ENCODE measurements at regions of chr2 and their contacts with region 1.

Region 1: DNA sequence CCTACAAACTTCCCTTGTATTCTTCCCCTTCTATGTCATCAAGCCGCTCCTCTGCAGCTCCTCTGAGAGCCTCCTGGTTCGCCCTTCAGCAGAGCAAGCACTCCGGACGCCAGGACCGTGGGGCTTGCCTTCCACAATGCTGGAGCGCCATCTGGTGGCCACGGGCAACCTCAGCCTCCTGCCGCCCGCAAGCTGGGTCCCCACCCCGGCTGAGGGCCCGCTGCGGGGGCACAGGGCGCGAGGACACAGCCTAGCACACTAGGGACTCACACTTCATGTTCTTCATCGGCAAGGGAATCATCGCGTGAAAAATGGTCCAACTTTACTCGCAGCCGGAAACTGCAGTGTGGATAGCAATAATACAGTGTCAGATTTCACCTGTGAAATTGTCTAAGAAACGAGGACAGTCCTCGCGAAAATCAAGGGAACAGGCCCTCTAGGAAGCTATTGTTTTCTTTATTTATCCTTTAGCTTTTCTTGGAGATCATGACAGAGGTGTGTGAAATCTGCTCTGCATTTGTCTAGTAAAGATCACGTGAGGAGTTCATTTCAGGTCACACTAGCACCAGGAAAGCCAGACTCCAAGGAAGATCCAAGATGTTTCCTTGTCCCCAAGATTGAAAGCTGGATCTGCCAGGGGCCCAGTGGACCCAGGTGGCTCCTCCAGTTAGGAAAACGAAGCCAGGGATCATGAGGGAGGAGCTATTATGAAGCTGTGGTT is 5.8 kb downstream of the PRLH start:
- DNase-seq: peak; percentile 92
- H3K4me3 ChIP-seq: no peak overlapping the region
- H3K27ac ChIP-seq: peak overlapping the region; percentile 6 to 28
- H3K4me1 ChIP-seq: peaks cover 0 to 8% of the 10 kb centered on the region in 2 donors
- H3K27me3 ChIP-seq: no peaks in the 10 kb centered on the region
- CTCF ChIP-seq: peak; percentile 97 to 100 (median 99)
- POLR2A ChIP-seq: peak in 1 of 2 donors; percentile 20

Region 2: DNA sequence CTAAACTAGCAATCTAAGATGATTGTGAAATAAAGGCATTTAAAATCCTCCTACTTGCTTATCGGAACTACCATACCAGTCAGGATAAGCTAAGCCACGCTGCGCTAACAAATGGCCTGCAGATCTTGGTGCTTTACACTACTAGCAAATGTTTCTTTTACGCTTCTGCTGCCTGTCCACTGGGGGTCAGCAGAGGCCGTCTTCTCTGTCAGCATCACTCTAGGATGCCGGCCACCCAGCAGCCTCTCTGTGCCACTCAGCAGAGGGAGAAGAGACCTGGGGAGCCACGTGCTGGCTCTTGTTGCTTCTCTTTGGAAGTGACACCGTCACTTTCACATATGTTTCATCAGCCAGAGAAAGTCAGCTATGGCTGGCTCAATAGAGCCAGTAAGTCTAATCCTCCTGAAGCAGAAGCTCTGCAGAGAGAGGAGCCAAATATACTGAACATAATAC is 449.9 kb before region 1 on chr2:
- intact Hi-C with region 1: loop called (anchors 10 kb)
- DNase-seq: peak; percentile 65 to 72
- H3K4me3 ChIP-seq: no peak overlapping the region
- H3K27ac ChIP-seq: peak overlapping the region in 1 of 2 donors; percentile 55
- H3K4me1 ChIP-seq: peaks cover 0 to 7% of the 10 kb centered on the region in 2 donors
- H3K27me3 ChIP-seq: no peaks in the 10 kb centered on the region
- CTCF ChIP-seq: peak; percentile 58 to 70 (median 66)
- POLR2A ChIP-seq: no peak

Region 3: GRCh38 chr2:237512774-237513466 is 59.3 kb before region 1 on chr2:
- intact Hi-C with region 1: loop called (anchors 5 kb)
- DNase-seq: peak; percentile 90 to 92
- H3K4me3 ChIP-seq: no peak overlapping the region
- H3K27ac ChIP-seq: peak overlapping the region; percentile 67 to 77
- H3K4me1 ChIP-seq: no peaks in the 10 kb centered on the region
- H3K27me3 ChIP-seq: no peaks in the 10 kb centered on the region
- CTCF ChIP-seq: peak; percentile 89 to 97 (median 95)
- POLR2A ChIP-seq: no peak